Colonic mucosa (tissue), 4 donors: ENCODE measurements at regions of chr17 and their contacts with region 1.

Region 1: DNA sequence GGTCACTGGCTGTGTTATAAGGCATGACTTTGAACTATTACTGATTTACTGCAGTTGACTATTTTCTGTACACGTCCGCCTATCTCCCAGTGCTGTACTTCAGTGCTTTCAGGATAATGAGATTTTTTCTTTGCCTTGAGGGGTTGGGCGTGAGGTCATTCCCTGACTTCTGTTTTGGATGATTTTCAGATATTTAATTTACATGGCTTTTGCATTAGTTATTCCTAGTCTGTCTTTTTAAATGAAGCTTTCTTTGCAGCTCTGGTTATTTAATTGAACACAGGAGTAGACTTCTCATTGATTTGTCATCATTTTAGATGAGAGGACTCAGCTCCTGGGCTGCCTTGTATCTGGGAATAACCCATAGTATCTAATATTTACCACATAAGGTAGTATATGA is 23.7 kb downstream of the WIPF2 start:
- DNase-seq: no peak
- H3K4me3 ChIP-seq: no peak overlapping the region
- H3K27ac ChIP-seq: no peak overlapping the region
- H3K4me1 ChIP-seq: no peaks in the 10 kb centered on the region
- H3K27me3 ChIP-seq: no peaks in the 10 kb centered on the region
- CTCF ChIP-seq: no peak

Region 2: GRCh38 chr17:40209404-40210093 is 33.2 kb before region 1 on chr17:
- intact Hi-C with region 1: no loop called
- DNase-seq: no peak
- H3K4me3 ChIP-seq: no peak overlapping the region
- H3K27ac ChIP-seq: no peak overlapping the region
- H3K4me1 ChIP-seq: no peaks in the 10 kb centered on the region
- H3K27me3 ChIP-seq: no peaks in the 10 kb centered on the region
- CTCF ChIP-seq: no peak

Region 3: DNA sequence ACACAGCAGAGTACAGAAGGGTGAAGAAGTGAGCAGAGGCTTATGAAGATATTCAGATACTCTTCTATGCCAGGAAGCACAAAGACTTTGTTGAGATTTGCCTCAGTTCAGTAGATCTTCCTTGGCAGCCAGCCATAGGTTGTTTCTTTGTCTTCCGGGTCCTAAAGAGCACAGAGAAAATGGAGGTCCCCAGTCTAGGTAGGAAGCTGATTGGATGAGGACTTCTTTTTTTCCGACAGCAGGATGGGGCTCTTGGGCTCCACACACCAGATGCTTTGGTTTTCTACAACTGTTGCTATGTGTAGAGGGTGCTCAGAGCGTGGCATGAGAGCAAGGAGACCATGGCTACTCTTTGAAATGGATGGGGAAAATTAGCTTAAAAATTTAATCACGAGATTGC is 36.6 kb after region 1 on chr17:
- intact Hi-C with region 1: loop called (anchors 5 kb)
- DNase-seq: no peak
- H3K4me3 ChIP-seq: no peak overlapping the region
- H3K27ac ChIP-seq: no peak overlapping the region
- H3K4me1 ChIP-seq: peaks cover 4% of the 10 kb centered on the region
- H3K27me3 ChIP-seq: no peaks in the 10 kb centered on the region
- CTCF ChIP-seq: no peak